Activated B cell treated with CpG ODN at 0.5 μM for 24 hours (primary cell): ENCODE measurements at regions of chr9 and their contacts with region 1.

Region 1: DNA sequence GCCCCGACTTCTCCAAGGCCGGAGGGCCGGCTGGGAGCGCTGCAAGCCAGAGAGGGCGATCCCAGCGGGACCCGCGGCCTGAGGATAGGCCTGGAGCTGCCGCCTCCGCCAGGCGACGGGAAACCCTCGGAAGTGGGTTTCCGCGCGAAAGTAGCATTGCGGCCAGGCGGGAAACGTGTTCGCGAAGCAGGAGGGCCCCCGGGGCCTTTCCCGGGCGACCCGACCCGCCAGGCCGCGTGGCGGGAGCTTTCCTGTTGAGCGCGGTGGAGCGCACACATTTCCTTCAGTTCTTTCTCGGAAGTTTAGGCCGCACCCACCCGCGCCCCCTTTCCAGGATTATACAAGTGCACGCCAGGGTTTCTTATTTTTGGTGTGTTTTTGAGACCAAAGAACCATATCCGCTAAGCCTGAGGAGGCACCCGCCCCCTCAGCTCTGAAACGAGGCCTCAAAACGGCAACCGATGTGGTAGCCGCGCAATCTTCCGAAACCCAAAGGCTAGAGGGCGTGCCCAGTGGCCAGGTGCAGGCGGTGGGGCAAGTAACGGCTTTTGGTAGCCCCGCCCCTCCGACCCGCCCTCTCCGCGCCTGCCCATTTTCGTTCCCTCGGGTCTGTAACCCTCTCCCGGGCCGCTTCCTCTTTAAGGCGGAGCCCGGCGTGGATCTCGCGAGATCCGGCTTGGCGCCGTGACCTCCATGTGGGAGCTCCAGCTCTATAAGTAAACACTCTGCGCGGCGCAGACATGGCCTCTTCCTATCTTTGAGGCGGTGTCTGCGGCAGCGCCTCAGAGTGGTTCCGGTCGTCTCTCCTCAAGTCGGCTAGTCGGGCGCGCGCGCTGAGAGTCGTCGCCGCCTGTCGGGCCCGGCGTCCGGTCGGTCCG is at the start of gene UHRF2:
- DNase-seq: peak; percentile 95
- ATAC-seq: peak; percentile 87
- H3K4me3 Mint-ChIP-seq: peak within 1 kb of the TSS; percentile 82
- H3K27ac Mint-ChIP-seq: peak within 1 kb of the TSS; percentile 96
- H3K4me1 Mint-ChIP-seq: peaks cover 61% of the 10 kb centered on the region
- H3K27me3 Mint-ChIP-seq: no peaks in the 10 kb centered on the region
- CTCF ChIP-seq: no peak
- total RNA-seq, gene UHRF2: 81.1 and 114 TPM in 2 replicates

Region 2: DNA sequence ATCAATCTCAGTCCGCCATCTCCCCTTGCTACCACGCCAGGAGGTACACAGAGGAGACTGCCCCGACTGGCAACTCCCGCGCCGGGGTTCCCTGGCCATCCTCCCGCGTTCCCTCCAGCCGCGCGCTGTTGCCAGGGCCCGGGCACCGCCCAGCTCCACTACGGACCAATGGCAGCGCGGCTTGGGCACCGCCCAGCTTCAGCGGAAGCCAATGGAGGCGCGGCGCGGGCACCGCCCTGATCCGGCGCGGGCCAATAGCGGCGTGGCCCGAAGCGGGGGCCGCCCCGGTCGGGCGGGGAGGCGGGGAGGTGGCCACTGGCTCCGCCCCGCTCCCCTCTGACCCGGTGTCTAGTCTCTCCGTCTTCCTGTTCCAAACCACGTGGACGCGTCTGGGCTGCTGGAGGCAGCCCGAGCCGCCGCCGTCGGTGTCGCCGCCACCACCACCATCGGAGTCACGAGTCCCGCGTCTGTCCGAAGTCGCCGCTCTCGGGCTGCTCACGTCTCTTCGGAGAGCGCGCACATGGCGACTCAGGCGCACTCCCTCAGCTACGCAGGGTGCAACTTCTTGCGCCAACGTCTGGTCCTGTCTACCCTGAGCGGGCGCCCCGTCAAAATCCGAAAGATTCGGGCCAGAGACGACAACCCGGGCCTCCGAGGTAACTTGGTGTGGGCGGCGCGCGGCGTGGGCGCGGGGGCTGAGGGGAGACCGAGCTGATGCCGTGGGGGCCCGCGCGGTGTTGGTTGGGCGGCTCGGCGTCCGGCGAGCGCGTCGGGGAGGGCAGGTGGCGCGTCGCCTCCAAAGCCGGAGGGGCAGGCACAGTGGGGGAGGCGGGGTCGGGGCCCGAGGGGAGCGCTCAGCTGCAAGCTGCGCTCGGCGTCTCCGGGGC is 1619.9 kb before region 1 on chr9 and contains the start of gene RCL1:
- CTCF ChIA-PET with region 1: no interaction called
- POLR2A ChIA-PET with region 1: interaction called, 3 read pairs
- intact Hi-C with region 1: loop called (anchors 5 kb)
- DNase-seq: peak; percentile 97
- ATAC-seq: peak; percentile 93
- H3K4me3 Mint-ChIP-seq: peak within 1 kb of the TSS; percentile 97
- H3K27ac Mint-ChIP-seq: peak within 1 kb of the TSS; percentile 96
- H3K4me1 Mint-ChIP-seq: peaks cover 40% of the 10 kb centered on the region
- H3K27me3 Mint-ChIP-seq: peaks cover 2% of the 10 kb centered on the region
- CTCF ChIP-seq: no peak
- total RNA-seq, gene RCL1: 23.9 and 26.0 TPM in 2 replicates

Region 3: GRCh38 chr9:6055213-6055612 is 357.5 kb before region 1 on chr9:
- CTCF ChIA-PET with region 1: no interaction called
- POLR2A ChIA-PET with region 1: no interaction called
- intact Hi-C with region 1: loop called (anchors 10 kb)
- DNase-seq: no peak
- ATAC-seq: peak; percentile 23
- H3K4me3 Mint-ChIP-seq: no peak overlapping the region
- H3K27ac Mint-ChIP-seq: no peak overlapping the region
- H3K4me1 Mint-ChIP-seq: peaks cover 19% of the 10 kb centered on the region
- H3K27me3 Mint-ChIP-seq: peaks cover 3% of the 10 kb centered on the region
- CTCF ChIP-seq: no peak

Region 4: GRCh38 chr9:6428940-6429889 is 16.5 kb after region 1 on chr9:
- CTCF ChIA-PET with region 1: interaction called, 5 read pairs
- POLR2A ChIA-PET with region 1: interaction called, 164 read pairs
- intact Hi-C with region 1: loop called (anchors 1 kb)
- DNase-seq: no peak
- ATAC-seq: peak; percentile 81
- H3K4me3 Mint-ChIP-seq: peak overlapping the region; percentile 64
- H3K27ac Mint-ChIP-seq: peak overlapping the region; percentile 73
- H3K4me1 Mint-ChIP-seq: peaks cover 80% of the 10 kb centered on the region
- H3K27me3 Mint-ChIP-seq: no peaks in the 10 kb centered on the region
- CTCF ChIP-seq: no peak

Region 5: GRCh38 chr9:6575324-6576034 is 162.8 kb after region 1 on chr9:
- CTCF ChIA-PET with region 1: no interaction called
- POLR2A ChIA-PET with region 1: no interaction called
- intact Hi-C with region 1: loop called (anchors 5 kb)
- DNase-seq: no peak
- ATAC-seq: peak; percentile 96
- H3K4me3 Mint-ChIP-seq: peak overlapping the region; percentile 8
- H3K27ac Mint-ChIP-seq: no peak overlapping the region
- H3K4me1 Mint-ChIP-seq: peaks cover 37% of the 10 kb centered on the region
- H3K27me3 Mint-ChIP-seq: peaks cover 19% of the 10 kb centered on the region
- CTCF ChIP-seq: no peak

Region 6: GRCh38 chr9:6873857-6874256 is 461.1 kb after region 1 on chr9:
- CTCF ChIA-PET with region 1: no interaction called
- POLR2A ChIA-PET with region 1: no interaction called
- intact Hi-C with region 1: no loop called
- DNase-seq: no peak
- ATAC-seq: no peak
- H3K4me3 Mint-ChIP-seq: no peak overlapping the region
- H3K27ac Mint-ChIP-seq: no peak overlapping the region
- H3K4me1 Mint-ChIP-seq: peaks cover 44% of the 10 kb centered on the region
- H3K27me3 Mint-ChIP-seq: no peaks in the 10 kb centered on the region
- CTCF ChIP-seq: no peak